ENCODE measurements at regions of chr12 and their contacts with region 1.

Region 1: GRCh38 chr12:72346363-72346944 is 74.3 kb downstream of the TRHDE start:
- DNase-seq: peak in 3 of 9 donors; percentile 2 to 27 (median 3)
- ATAC-seq: peak; percentile 57
- H3K4me3 ChIP-seq: no peak overlapping the region
- H3K4me3 Mint-ChIP-seq: no peak overlapping the region
- H3K27ac ChIP-seq: no peak overlapping the region
- H3K27ac Mint-ChIP-seq: no peak overlapping the region
- H3K4me1 ChIP-seq: no peaks in the 10 kb centered on the region
- H3K4me1 Mint-ChIP-seq: no peaks in the 10 kb centered on the region
- H3K27me3 ChIP-seq: no peaks in the 10 kb centered on the region
- H3K27me3 Mint-ChIP-seq: peaks cover 0 to under 1% (median 0%) of the 10 kb centered on the region in 5 donors

Region 2: DNA sequence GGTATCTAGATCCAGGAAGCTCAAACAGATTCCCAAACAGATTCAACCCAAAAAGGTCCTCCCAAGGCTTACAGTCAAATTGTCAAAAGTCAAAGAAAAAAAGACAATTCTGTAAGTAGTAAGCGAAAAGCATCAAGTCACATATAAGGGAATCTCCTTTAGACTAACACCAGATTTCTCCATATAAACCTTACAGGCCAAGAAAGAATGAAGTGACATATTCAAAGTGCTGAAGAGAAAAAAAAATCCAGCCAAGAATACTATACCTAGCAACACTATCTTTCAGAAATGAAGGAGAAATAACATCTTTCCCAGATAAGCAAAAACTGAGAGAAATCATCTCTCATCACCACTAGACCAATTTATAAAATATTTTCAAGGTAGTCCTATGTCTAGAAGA is 986.4 kb before region 1 on chr12:
- CTCF ChIA-PET with region 1: no interaction called
- POLR2A ChIA-PET with region 1: no interaction called
- intact Hi-C with region 1: no loop called
- DNase-seq: no peak
- ATAC-seq: no peak
- H3K4me3 ChIP-seq: no peak overlapping the region
- H3K4me3 Mint-ChIP-seq: no peak overlapping the region
- H3K27ac ChIP-seq: no peak overlapping the region
- H3K27ac Mint-ChIP-seq: no peak overlapping the region
- H3K4me1 ChIP-seq: no peaks in the 10 kb centered on the region
- H3K4me1 Mint-ChIP-seq: no peaks in the 10 kb centered on the region
- H3K27me3 ChIP-seq: no peaks in the 10 kb centered on the region
- H3K27me3 Mint-ChIP-seq: peaks cover 0 to 7% (median 2%) of the 10 kb centered on the region in 5 donors

Region 3: DNA sequence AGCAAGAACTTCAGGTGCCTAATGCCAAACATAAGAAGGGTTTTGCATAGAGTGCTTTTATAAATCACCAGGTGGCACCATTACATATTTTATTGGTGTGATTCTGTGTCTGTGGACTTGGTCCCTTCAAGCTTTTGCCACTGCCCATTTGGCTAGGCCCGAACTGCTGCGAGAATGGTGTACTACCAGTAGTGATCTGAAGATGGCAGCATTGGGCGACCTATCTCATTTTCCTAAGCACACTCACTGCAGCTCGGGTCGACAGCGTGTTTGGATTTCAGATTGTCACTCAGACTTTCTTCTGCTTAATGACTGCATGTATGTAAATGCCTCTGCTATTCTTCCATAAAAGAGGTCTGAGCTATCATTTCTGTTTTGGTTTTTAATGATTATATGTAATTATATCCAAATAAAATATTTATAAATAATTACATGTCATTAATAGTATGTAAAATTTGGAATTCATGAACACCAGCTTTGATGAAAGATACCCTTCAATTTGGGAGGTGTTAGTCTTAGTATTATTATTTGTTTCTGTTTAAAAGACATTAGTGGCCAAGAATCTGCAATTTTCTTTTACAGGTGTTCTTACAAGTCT is 329.3 kb before region 1 on chr12:
- CTCF ChIA-PET with region 1: no interaction called
- POLR2A ChIA-PET with region 1: no interaction called
- intact Hi-C with region 1: loop called in 1 of 2 experiments (anchors 10 kb)
- DNase-seq: peak; percentile 11 to 57 (median 46)
- ATAC-seq: peak; percentile 82
- H3K4me3 ChIP-seq: no peak overlapping the region
- H3K4me3 Mint-ChIP-seq: no peak overlapping the region
- H3K27ac ChIP-seq: no peak overlapping the region
- H3K27ac Mint-ChIP-seq: no peak overlapping the region
- H3K4me1 ChIP-seq: no peaks in the 10 kb centered on the region
- H3K4me1 Mint-ChIP-seq: no peaks in the 10 kb centered on the region
- H3K27me3 ChIP-seq: no peaks in the 10 kb centered on the region
- H3K27me3 Mint-ChIP-seq: peaks cover 12 to 26% (median 23%) of the 10 kb centered on the region in 5 donors

Region 4: GRCh38 chr12:72173974-72174373 is 172.5 kb before region 1 on chr12:
- CTCF ChIA-PET with region 1: no interaction called
- POLR2A ChIA-PET with region 1: no interaction called
- intact Hi-C with region 1: no loop called
- DNase-seq: no peak
- ATAC-seq: no peak
- H3K4me3 ChIP-seq: no peak overlapping the region
- H3K4me3 Mint-ChIP-seq: no peak overlapping the region
- H3K27ac ChIP-seq: no peak overlapping the region
- H3K27ac Mint-ChIP-seq: no peak overlapping the region
- H3K4me1 ChIP-seq: no peaks in the 10 kb centered on the region
- H3K4me1 Mint-ChIP-seq: no peaks in the 10 kb centered on the region
- H3K27me3 ChIP-seq: no peaks in the 10 kb centered on the region
- H3K27me3 Mint-ChIP-seq: peaks cover 0 to 5% (median 0%) of the 10 kb centered on the region in 5 donors